Heart right ventricle (tissue), 16 donors: ENCODE measurements at regions of chr4 and their contacts with region 1.

Region 1: GRCh38 chr4:103415786-103416185 is 217.6 kb upstream of the CENPE start:
- DNase-seq: no peak
- ATAC-seq: no peak
- H3K4me3 ChIP-seq: no peak overlapping the region
- H3K27ac ChIP-seq: no peak overlapping the region
- H3K4me1 ChIP-seq: no peaks in the 10 kb centered on the region
- H3K27me3 ChIP-seq: no peaks in the 10 kb centered on the region
- CTCF ChIP-seq: no peak

Region 2: GRCh38 chr4:102918859-102919258 is 496.9 kb before region 1 on chr4:
- intact Hi-C with region 1: no loop called
- DNase-seq: no peak
- ATAC-seq: no peak
- H3K4me3 ChIP-seq: no peak overlapping the region
- H3K27ac ChIP-seq: no peak overlapping the region
- H3K4me1 ChIP-seq: no peaks in the 10 kb centered on the region
- H3K27me3 ChIP-seq: no peaks in the 10 kb centered on the region
- CTCF ChIP-seq: no peak

Region 3: GRCh38 chr4:103375278-103375677 is 40.5 kb before region 1 on chr4:
- intact Hi-C with region 1: loop called in 1 of 10 experiments (anchors 1 kb)
- DNase-seq: no peak
- ATAC-seq: no peak
- H3K4me3 ChIP-seq: no peak overlapping the region
- H3K27ac ChIP-seq: no peak overlapping the region
- H3K4me1 ChIP-seq: no peaks in the 10 kb centered on the region
- H3K27me3 ChIP-seq: no peaks in the 10 kb centered on the region
- CTCF ChIP-seq: no peak

Region 4: DNA sequence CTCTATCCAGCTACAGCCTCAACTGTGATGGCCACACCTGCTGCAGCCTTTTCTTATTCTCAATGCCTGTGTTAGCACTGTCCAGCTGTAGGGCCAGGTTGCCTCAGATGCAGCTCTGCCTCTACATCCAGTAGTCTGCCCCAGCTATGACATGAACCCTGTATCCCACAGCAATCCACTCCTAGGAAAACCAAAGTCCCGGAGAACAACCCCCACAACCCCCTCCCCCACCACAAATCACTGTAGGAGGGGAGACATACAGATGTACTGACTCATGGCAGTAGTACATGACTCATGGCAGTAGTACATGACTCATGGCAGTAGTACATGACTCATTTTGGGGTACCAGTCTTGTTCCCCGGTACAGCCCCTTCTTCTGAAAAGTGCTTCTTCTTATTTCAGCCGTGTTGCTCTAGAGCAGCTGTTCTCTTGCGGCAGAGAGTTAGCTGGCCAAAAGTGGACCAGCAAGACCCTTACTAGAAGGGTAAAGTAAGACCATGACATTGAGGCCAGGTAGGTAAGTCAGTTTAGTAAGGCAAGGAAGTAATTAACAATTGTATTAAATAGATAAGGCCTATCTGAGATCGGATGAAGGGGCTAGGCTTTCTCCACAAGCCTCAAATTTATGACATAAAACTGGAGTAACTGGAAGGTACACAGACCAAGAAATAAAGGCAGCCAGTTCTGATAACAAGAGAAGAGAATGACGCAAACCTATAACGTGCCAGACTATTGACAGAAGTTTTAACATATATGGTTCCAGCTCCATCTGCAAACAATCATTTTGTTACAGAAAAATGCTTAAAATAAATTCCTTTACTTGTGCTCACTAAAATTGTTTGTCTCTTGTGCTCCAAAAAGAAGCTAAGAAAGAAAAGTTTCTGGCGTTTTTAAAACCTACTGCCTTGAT is 82.6 kb after region 1 on chr4:
- intact Hi-C with region 1: no loop called
- DNase-seq: no peak
- ATAC-seq: no peak
- H3K4me3 ChIP-seq: no peak overlapping the region
- H3K27ac ChIP-seq: no peak overlapping the region
- H3K4me1 ChIP-seq: no peaks in the 10 kb centered on the region
- H3K27me3 ChIP-seq: no peaks in the 10 kb centered on the region
- CTCF ChIP-seq: no peak